ENCODE measurements at regions of chr18 and their contacts with region 1.

Region 1: GRCh38 chr18:64202210-64202836 is 53.4 kb upstream of the LINC00305 start:
- DNase-seq: peak; percentile 12
- ATAC-seq: peak; percentile 77
- H3K4me3 ChIP-seq: no peak overlapping the region
- H3K27ac ChIP-seq: no peak overlapping the region
- H3K4me1 ChIP-seq: no peaks in the 10 kb centered on the region
- H3K27me3 ChIP-seq: no peaks in the 10 kb centered on the region
- CTCF ChIP-seq: no peak
- EP300 ChIP-seq: no peak
- POLR2A ChIP-seq: no peak
- RAD21 ChIP-seq: no peak

Region 2: GRCh38 chr18:64037812-64038414 is 164.4 kb before region 1 on chr18:
- CTCF ChIA-PET with region 1: interaction called, 3 read pairs
- POLR2A ChIA-PET with region 1: no interaction called
- RAD21 ChIA-PET with region 1: interaction called, 3 read pairs
- SMC1A ChIA-PET with region 1: no interaction called
- in situ Hi-C with region 1: no loop called
- intact Hi-C with region 1: loop called (anchors 10 kb)
- DNase-seq: no peak
- ATAC-seq: peak; percentile 91
- H3K4me3 ChIP-seq: no peak overlapping the region
- H3K27ac ChIP-seq: no peak overlapping the region
- H3K4me1 ChIP-seq: no peaks in the 10 kb centered on the region
- H3K27me3 ChIP-seq: no peaks in the 10 kb centered on the region
- CTCF ChIP-seq: peak; percentile 38 to 63 (median 57); a peak in 5 of 6 replicates
- EP300 ChIP-seq: no peak
- POLR2A ChIP-seq: no peak
- RAD21 ChIP-seq: peak; percentile 71

Region 3: DNA sequence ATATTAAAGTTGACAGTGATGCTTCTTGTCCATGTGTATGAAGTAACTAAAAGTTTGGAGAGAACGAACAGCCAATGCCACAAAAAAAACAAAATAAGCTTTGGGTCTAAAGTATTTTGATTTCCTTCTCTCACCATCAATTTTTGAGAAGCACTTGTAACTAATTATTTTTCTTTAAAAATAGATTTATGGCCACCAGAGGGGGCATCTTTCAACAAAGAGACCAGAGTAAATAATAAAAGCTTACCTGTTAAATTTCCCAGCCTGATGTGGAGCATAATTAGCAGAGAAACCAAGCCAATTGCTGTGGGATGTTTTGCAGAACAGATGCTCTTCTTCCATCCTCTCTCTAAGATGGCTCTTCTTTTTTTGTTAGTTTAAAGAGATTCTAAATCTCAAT is 82.4 kb before region 1 on chr18:
- CTCF ChIA-PET with region 1: interaction called, 5 read pairs
- POLR2A ChIA-PET with region 1: no interaction called
- RAD21 ChIA-PET with region 1: interaction called, 5 read pairs
- SMC1A ChIA-PET with region 1: interaction called, 12 read pairs
- in situ Hi-C with region 1: no loop called
- intact Hi-C with region 1: loop called (anchors 5 kb)
- DNase-seq: no peak
- ATAC-seq: peak; percentile 35; the same call in 2 of the 3 replicates
- H3K4me3 ChIP-seq: no peak overlapping the region
- H3K27ac ChIP-seq: no peak overlapping the region
- H3K4me1 ChIP-seq: no peaks in the 10 kb centered on the region
- H3K27me3 ChIP-seq: no peaks in the 10 kb centered on the region
- CTCF ChIP-seq: no peak; a peak in 2 of 6 replicates
- EP300 ChIP-seq: no peak
- POLR2A ChIP-seq: no peak
- RAD21 ChIP-seq: peak; percentile 21; the same call in 1 of the 2 replicates

Region 4: DNA sequence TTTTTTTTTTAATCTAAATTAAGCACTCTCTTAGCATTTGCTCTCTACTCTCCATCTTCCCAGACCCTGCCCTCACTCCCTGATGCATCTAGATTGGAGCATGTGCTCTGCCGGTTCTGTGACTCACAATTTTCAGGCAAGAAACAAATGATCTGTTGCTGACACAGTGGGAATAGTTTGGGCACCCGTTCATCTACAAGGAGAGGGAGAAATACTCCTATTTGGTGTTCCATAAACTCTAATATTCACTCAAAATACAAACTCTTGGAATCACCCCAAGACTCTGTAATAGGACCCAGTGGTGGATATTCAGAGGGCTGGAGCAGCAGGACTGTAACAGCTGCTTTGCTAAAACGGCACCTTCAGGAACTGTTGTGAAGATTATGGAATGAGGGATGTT is 16.3 kb before region 1 on chr18:
- CTCF ChIA-PET with region 1: interaction called, 5 read pairs
- POLR2A ChIA-PET with region 1: interaction called, 5 read pairs
- RAD21 ChIA-PET with region 1: interaction called, 34 read pairs
- SMC1A ChIA-PET with region 1: interaction called, 28 read pairs
- in situ Hi-C with region 1: no loop called
- intact Hi-C with region 1: no loop called
- DNase-seq: no peak
- ATAC-seq: no peak
- H3K4me3 ChIP-seq: no peak overlapping the region
- H3K27ac ChIP-seq: no peak overlapping the region
- H3K4me1 ChIP-seq: no peaks in the 10 kb centered on the region
- H3K27me3 ChIP-seq: no peaks in the 10 kb centered on the region
- CTCF ChIP-seq: no peak
- EP300 ChIP-seq: no peak
- POLR2A ChIP-seq: no peak
- RAD21 ChIP-seq: no peak

Region 5: GRCh38 chr18:64253873-64254272 is 51.5 kb after region 1 on chr18:
- CTCF ChIA-PET with region 1: no interaction called
- POLR2A ChIA-PET with region 1: no interaction called
- RAD21 ChIA-PET with region 1: interaction called, 3 read pairs
- SMC1A ChIA-PET with region 1: interaction called, 16 read pairs
- in situ Hi-C with region 1: no loop called
- intact Hi-C with region 1: no loop called
- DNase-seq: no peak
- ATAC-seq: peak; percentile 28
- H3K4me3 ChIP-seq: no peak overlapping the region
- H3K27ac ChIP-seq: no peak overlapping the region
- H3K4me1 ChIP-seq: no peaks in the 10 kb centered on the region
- H3K27me3 ChIP-seq: no peaks in the 10 kb centered on the region; a peak in 1 of 4 replicates
- CTCF ChIP-seq: no peak
- EP300 ChIP-seq: no peak
- POLR2A ChIP-seq: no peak
- RAD21 ChIP-seq: no peak